ENCODE measurements at regions of chr7 and their contacts with region 1.

Region 1: GRCh38 chr7:66697449-66698438 is 42.8 kb upstream of the RABGEF1 start:
- DNase-seq: no peak
- H3K4me3 ChIP-seq: no peak overlapping the region
- H3K27ac ChIP-seq: no peak overlapping the region
- H3K4me1 ChIP-seq: no peaks in the 10 kb centered on the region
- H3K27me3 ChIP-seq: no peaks in the 10 kb centered on the region
- CTCF ChIP-seq: no peak

Region 2: GRCh38 chr7:66170309-66171231 is 527.2 kb before region 1 on chr7:
- CTCF ChIA-PET with region 1: no interaction called
- POLR2A ChIA-PET with region 1: no interaction called
- intact Hi-C with region 1: loop called (anchors 5 kb)
- DNase-seq: peak in 1 of 2 experiments; percentile 48
- H3K4me3 ChIP-seq: no peak overlapping the region
- H3K27ac ChIP-seq: no peak overlapping the region
- H3K4me1 ChIP-seq: no peaks in the 10 kb centered on the region; the same call in 1 of the 2 replicates
- H3K27me3 ChIP-seq: no peaks in the 10 kb centered on the region
- CTCF ChIP-seq: no peak

Measured in PC-9 (cell line).